ENCODE measurements at regions of chr12 and their contacts with region 1.

Region 1: GRCh38 chr12:121443193-121443870 is 43.4 kb downstream of the RNF34 start:
- DNase-seq: peak; percentile 82 to 92 (median 87)
- H3K4me3 ChIP-seq: no peak overlapping the region
- H3K27ac ChIP-seq: no peak overlapping the region
- H3K4me1 ChIP-seq: no peaks in the 10 kb centered on the region
- H3K27me3 ChIP-seq: no peaks in the 10 kb centered on the region
- CTCF ChIP-seq: peak; percentile 86

Region 2: GRCh38 chr12:121334513-121335343 is 108.6 kb before region 1 on chr12:
- intact Hi-C with region 1: loop called (anchors 10 kb)
- DNase-seq: peak in 2 of 5 donors; percentile 69 to 74
- H3K4me3 ChIP-seq: no peak overlapping the region
- H3K27ac ChIP-seq: no peak overlapping the region
- H3K4me1 ChIP-seq: no peaks in the 10 kb centered on the region
- H3K27me3 ChIP-seq: no peaks in the 10 kb centered on the region
- CTCF ChIP-seq: peak; percentile 80

Region 3: DNA sequence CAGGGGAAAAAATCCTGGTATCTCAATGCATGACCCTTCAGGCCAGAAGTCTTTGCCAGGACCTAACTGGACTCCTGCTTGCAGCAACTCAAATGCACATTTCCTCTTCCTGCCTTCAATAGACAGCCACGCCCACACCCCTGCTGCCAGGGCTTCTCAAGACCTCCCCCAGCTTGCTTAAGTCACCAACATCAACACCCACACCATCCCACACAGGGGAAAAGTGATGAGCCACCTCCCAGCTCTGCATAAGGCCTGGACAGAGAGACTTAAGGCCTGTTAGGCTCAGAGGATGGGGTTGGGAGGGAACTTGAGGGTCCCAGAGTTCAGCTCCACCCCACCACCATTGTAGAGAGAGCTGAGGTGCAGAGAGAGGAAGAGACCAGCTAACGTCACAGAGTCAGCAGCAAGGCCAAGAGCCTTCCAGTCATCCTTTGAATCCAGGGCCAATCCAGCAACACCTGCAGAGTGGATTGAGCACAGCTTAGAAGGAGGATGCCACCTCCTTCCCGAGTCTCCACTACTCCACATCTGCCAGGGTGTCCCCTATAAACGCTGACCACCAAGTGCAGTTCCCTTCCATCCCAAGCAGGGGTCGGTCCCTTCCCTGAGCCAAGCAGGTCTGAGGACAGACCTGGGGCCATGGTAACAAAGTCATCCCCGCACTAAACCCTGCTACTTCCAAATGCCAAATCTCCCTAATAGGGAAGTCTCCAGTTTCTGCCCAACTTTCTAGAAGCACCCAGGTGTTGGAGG is 87.4 kb after region 1 on chr12:
- intact Hi-C with region 1: no loop called
- DNase-seq: peak in 4 of 5 donors; percentile 37 to 89 (median 58)
- H3K4me3 ChIP-seq: no peak overlapping the region
- H3K27ac ChIP-seq: peak overlapping the region in 1 of 2 donors; percentile 52
- H3K4me1 ChIP-seq: peaks cover 3 to 17% (median 13%) of the 10 kb centered on the region in 3 donors
- H3K27me3 ChIP-seq: no peaks in the 10 kb centered on the region
- CTCF ChIP-seq: no peak

Region 4: GRCh38 chr12:121657305-121658008 is 214.1 kb after region 1 on chr12:
- intact Hi-C with region 1: no loop called
- DNase-seq: no peak
- H3K4me3 ChIP-seq: no peak overlapping the region
- H3K27ac ChIP-seq: no peak overlapping the region
- H3K4me1 ChIP-seq: no peaks in the 10 kb centered on the region
- H3K27me3 ChIP-seq: no peaks in the 10 kb centered on the region
- CTCF ChIP-seq: no peak

Measured in kidney (tissue), 22 donors.